Aorta (tissue), 5 donors: ENCODE measurements at regions of chr5 and their contacts with region 1.

Region 1: GRCh38 chr5:170504031-170504596 is 294 bp downstream of the KCNIP1 start:
- DNase-seq: peak in 1 of 2 donors; percentile 79
- ATAC-seq: no peak
- H3K4me3 ChIP-seq: peak overlapping the region in 1 of 2 donors; percentile 41
- H3K27ac ChIP-seq: no peak overlapping the region
- H3K4me1 ChIP-seq: no peaks in the 10 kb centered on the region
- H3K27me3 ChIP-seq: no peaks in the 10 kb centered on the region

Region 2: GRCh38 chr5:170434966-170435605 is 69.0 kb before region 1 on chr5:
- intact Hi-C with region 1: loop called in 1 of 2 experiments (anchors 2 kb)
- DNase-seq: peak; percentile 70 to 89
- ATAC-seq: peak; percentile 89
- H3K4me3 ChIP-seq: no peak overlapping the region
- H3K27ac ChIP-seq: no peak overlapping the region
- H3K4me1 ChIP-seq: no peaks in the 10 kb centered on the region
- H3K27me3 ChIP-seq: no peaks in the 10 kb centered on the region